ENCODE measurements at regions of chr22 and their contacts with region 1.

Region 1: DNA sequence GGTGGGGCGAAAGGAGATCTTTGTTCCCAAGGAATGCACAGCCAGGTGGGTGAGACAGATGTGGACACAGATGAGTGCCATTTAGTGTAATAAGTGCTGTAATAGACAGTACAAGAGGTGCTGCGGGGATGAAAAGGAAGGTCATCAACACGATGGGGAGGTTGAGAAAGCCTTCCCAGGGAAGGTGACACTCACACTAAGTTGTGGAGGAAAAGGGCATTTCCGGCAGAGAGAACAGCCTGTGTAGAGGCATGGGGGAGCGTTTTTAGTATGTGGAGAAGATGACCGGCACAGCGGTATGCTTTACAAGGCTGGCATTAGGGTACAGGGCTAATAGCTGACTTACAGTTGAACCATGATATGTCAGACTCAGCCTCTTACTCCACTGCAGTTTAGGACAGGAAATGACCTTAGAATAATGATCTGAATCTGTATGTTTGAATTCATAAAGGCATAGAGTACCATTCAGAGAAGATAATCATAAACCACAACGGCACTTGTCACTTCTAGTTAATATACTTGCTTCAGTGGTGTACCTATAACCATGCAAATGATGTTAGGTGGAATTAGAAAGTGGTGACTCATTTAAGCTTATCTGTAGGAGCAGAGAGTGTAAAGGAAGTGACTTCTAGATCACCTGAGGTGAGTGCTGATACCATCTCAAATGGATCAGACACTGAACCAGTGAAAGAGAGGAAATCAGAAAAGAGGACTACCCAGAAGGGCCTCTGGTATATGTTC is 60.6 kb downstream of the FAM83F start:
- DNase-seq: no peak
- H3K4me3 Mint-ChIP-seq: peak overlapping the region; percentile 64
- H3K27ac Mint-ChIP-seq: peak overlapping the region; percentile 88
- H3K4me1 Mint-ChIP-seq: peaks cover 54% of the 10 kb centered on the region
- H3K27me3 Mint-ChIP-seq: no peaks in the 10 kb centered on the region

Region 2: DNA sequence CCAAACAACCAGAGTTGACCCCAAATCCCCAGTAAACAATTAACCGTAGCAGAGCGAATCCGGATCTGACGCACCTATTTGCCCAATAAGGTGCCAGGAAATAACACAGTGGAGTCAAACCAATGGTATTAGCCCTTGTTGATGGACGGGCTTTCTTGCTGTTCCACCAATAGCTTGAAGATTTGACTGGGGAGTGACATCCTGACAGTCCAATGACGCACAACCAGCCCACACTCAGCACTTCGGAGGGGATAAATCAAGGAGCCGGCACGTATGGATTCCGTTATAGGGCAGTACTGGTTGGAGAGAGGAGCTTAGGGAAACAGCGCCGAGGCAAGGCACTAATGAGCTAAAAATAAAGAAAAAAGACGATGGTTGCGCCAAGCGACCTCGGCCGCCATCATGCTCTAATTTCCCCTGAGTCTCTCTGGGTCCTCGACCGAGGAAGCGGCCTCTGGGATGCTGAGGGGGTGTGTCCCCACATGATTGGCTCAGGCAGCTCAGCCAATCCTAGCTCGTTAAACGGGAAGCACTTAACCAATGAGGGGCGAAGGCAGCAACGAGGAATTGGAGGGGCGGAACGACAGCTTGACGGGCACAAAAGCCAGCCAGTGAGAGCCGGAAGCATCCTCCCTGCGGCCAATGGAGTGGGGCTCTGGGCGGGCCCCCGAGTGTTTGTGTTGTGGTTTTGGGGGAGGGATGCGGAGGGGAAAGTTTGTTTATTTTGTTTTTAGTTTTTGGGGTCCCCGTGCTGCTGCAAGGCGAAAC is 11.0 kb before region 1 on chr22:
- intact Hi-C with region 1: loop called (anchors 1 kb)
- DNase-seq: peak; percentile 98
- H3K4me3 Mint-ChIP-seq: peak overlapping the region; percentile 90
- H3K27ac Mint-ChIP-seq: peak overlapping the region; percentile 100
- H3K4me1 Mint-ChIP-seq: peaks cover 17% of the 10 kb centered on the region
- H3K27me3 Mint-ChIP-seq: peaks cover 3% of the 10 kb centered on the region

Region 3: GRCh38 chr22:40094485-40094884 is 39.2 kb after region 1 on chr22:
- intact Hi-C with region 1: loop called (anchors 5 kb)
- DNase-seq: no peak
- H3K4me3 Mint-ChIP-seq: peak overlapping the region; percentile 30
- H3K27ac Mint-ChIP-seq: peak overlapping the region; percentile 21
- H3K4me1 Mint-ChIP-seq: peaks cover 33% of the 10 kb centered on the region
- H3K27me3 Mint-ChIP-seq: no peaks in the 10 kb centered on the region